ENCODE measurements at regions of chr11 and their contacts with region 1.

Region 1: DNA sequence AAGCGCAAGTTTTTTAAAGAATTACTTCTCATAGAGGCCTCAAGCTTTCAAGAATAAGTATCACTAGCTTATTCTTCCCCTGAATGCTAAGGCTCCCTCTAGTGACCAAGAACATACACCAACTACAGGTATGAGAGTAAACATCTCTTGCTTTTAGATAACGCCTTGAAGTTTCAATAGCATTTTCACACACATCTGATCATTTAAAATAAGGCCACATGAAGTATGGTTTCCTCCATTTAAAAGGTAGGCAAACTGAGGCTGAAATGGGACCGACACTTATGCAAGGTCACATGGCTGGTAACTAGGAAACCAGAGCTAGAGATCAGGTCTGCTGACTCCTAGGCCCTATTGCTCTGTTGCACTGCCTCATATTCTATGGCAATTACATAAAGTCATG is 66.5 kb downstream of the CCDC34 start:
- DNase-seq: no peak
- ATAC-seq: peak; percentile 94
- H3K4me3 Mint-ChIP-seq: no peak overlapping the region
- H3K27ac Mint-ChIP-seq: no peak overlapping the region
- H3K4me1 Mint-ChIP-seq: peaks cover 10% of the 10 kb centered on the region
- H3K27me3 Mint-ChIP-seq: peaks cover 4% of the 10 kb centered on the region; the same call in 1 of the 2 replicates
- CTCF ChIP-seq: peak; percentile 39; the same call in 1 of the 2 replicates

Region 2: GRCh38 chr11:26867286-26867685 is 429.2 kb before region 1 on chr11:
- CTCF ChIA-PET with region 1: no interaction called
- POLR2A ChIA-PET with region 1: no interaction called
- DNase-seq: no peak
- ATAC-seq: no peak
- H3K4me3 Mint-ChIP-seq: no peak overlapping the region
- H3K27ac Mint-ChIP-seq: no peak overlapping the region
- H3K4me1 Mint-ChIP-seq: no peaks in the 10 kb centered on the region
- H3K27me3 Mint-ChIP-seq: no peaks in the 10 kb centered on the region
- CTCF ChIP-seq: no peak

Region 3: DNA sequence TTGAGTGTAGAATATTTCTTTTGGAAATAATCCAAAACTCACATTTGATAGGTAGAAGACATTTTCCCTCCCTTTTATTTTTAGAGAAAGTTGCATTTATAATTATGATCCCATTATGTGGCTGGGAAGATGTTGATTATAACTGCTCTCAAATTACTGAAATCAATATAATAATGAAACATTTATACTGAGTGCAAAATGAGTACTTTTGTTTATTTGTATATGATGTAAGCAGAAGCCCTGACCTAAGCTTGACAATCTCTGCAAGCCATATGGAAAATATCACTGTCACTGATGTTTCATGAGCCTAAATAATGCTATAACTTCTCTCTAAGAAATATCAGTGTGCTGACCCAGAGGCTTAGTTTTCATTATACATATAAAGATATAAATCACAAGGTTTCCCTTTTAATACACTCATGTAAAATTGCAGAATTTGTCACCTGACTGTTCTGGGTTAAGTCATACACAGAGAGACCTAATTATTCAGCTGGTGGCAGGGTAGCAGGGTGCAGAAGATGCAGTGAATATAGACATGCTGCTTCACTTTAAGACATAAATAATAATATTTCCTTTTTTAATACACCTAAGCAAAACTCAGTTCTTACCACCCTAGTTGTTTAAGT is 156.6 kb before region 1 on chr11:
- CTCF ChIA-PET with region 1: no interaction called
- POLR2A ChIA-PET with region 1: no interaction called
- DNase-seq: no peak
- ATAC-seq: no peak
- H3K4me3 Mint-ChIP-seq: no peak overlapping the region
- H3K27ac Mint-ChIP-seq: no peak overlapping the region
- H3K4me1 Mint-ChIP-seq: no peaks in the 10 kb centered on the region
- H3K27me3 Mint-ChIP-seq: no peaks in the 10 kb centered on the region; the same call in 1 of the 2 replicates
- CTCF ChIP-seq: no peak

Region 4: GRCh38 chr11:27209562-27210005 is 86.9 kb before region 1 on chr11:
- CTCF ChIA-PET with region 1: interaction called, 15 read pairs
- POLR2A ChIA-PET with region 1: interaction called, 8 read pairs
- DNase-seq: no peak
- ATAC-seq: no peak
- H3K4me3 Mint-ChIP-seq: no peak overlapping the region
- H3K27ac Mint-ChIP-seq: no peak overlapping the region
- H3K4me1 Mint-ChIP-seq: peaks cover 16% of the 10 kb centered on the region
- H3K27me3 Mint-ChIP-seq: no peaks in the 10 kb centered on the region
- CTCF ChIP-seq: no peak

Region 5: DNA sequence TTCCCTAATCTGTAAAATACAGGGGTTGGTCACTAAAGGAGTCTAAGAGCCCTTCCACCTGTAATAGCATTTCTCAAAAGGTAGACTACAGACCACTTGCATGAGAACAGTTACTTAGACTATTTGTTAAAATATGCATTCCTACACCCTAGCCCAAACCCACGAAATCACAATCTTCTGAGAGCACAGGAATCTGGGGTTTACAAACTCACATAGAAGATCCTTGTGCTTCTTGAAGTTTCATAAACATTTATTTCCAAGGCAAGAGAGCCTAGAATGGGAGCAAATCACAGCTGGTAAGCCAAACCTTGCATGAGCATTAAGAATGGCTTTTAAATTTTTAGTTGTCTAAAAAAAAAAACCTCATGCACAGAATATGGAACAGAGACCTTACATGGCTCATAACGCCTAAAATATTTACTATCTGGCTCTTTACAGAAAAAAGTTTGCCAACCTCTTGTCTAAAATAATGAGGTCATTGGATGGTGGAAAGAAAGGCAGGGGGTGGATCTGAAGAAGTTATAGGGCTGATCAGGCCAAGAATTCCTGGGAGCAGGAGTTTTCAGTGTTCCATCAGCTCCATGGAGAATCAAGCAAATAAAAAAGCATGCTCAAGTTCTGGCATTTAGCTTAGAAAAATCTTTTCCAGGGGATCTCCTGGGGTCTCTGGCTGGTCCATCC is 66.8 kb before region 1 on chr11:
- CTCF ChIA-PET with region 1: interaction called, 19 read pairs
- POLR2A ChIA-PET with region 1: no interaction called
- DNase-seq: no peak
- ATAC-seq: no peak
- H3K4me3 Mint-ChIP-seq: no peak overlapping the region
- H3K27ac Mint-ChIP-seq: no peak overlapping the region
- H3K4me1 Mint-ChIP-seq: peaks cover 35% of the 10 kb centered on the region
- H3K27me3 Mint-ChIP-seq: peaks cover 4% of the 10 kb centered on the region; the same call in 1 of the 2 replicates
- CTCF ChIP-seq: no peak

Region 6: GRCh38 chr11:27309046-27309445 is 12.5 kb after region 1 on chr11:
- CTCF ChIA-PET with region 1: interaction called, 13 read pairs
- POLR2A ChIA-PET with region 1: no interaction called
- DNase-seq: no peak
- ATAC-seq: no peak
- H3K4me3 Mint-ChIP-seq: no peak overlapping the region
- H3K27ac Mint-ChIP-seq: no peak overlapping the region
- H3K4me1 Mint-ChIP-seq: peaks cover 14% of the 10 kb centered on the region
- H3K27me3 Mint-ChIP-seq: no peaks in the 10 kb centered on the region; the same call in 1 of the 2 replicates
- CTCF ChIP-seq: no peak

Region 7: DNA sequence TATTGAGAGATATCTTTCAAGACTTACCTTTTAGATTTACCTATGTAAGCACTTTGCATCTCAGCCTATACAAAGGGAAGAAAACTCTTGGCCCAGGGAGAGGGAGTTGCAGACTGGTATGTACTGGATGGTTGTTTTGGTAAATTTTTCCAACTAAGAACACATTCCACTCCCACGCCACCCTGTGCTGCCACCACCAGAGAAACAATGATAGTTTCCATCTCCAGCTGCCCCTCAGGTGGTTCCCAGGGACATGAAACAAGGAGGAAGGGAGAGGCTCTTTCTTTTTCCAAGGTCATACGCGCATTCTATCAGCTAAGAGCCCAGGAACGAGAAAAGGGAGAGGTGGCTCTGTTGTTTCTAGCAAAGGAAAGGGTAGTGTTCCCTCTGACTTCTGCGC is 32.1 kb after region 1 on chr11:
- CTCF ChIA-PET with region 1: interaction called, 21 read pairs
- POLR2A ChIA-PET with region 1: no interaction called
- DNase-seq: peak; percentile 56
- ATAC-seq: peak; percentile 90
- H3K4me3 Mint-ChIP-seq: no peak overlapping the region
- H3K27ac Mint-ChIP-seq: peak overlapping the region; percentile 94
- H3K4me1 Mint-ChIP-seq: peaks cover 40% of the 10 kb centered on the region
- H3K27me3 Mint-ChIP-seq: no peaks in the 10 kb centered on the region
- CTCF ChIP-seq: no peak

Region 8: DNA sequence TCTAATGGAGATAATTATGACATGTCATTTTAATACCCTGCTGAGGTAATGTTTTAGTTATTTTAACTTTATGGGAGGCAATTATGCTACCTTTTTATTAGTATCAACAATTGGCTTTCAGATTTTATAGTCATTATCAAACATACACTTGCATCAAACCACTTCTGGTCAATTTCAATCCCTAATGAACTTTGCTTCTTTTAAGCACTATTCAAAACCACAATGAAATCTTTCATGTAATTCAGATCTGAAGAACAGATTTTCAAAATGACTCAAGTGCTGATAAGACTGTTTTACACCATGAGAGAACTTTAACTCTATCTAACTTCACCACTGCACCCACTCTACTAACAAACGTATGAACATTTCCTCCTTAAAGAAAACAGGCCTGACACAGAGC is 92.4 kb after region 1 on chr11:
- CTCF ChIA-PET with region 1: no interaction called
- POLR2A ChIA-PET with region 1: no interaction called
- DNase-seq: no peak
- ATAC-seq: no peak
- H3K4me3 Mint-ChIP-seq: no peak overlapping the region
- H3K27ac Mint-ChIP-seq: peak overlapping the region; percentile 47
- H3K4me1 Mint-ChIP-seq: peaks cover 69% of the 10 kb centered on the region
- H3K27me3 Mint-ChIP-seq: no peaks in the 10 kb centered on the region
- CTCF ChIP-seq: no peak

Region 9: DNA sequence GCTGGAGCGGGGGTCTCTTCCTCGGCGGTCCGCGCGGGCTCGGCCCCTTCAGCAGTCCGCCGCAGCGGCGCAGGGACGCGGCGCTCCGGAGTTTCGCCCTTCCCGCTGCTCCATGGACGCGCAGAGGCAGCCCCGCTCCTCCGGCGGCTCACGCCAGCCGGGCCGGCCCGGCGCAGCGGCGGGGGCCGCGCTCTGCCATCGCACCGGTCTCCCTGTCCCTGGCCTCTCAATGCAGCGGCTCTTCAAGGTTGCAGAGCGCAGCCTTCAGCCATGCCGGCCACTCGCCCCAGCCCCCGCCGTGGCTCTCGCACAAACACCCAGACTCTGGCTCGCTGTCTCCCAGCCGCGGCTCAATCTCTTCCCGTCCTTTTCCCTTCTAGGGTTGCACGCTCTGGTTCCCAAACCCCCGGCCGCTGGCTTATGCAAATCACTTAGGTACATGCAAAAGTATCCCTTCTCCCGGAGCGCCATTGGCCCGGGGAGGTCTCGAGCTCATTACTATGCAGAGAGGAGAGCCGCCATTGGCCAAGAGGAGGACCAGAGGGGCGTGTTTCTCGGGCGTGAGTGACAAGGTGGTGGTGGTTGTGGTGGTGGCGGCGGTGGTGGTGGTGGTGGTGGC is 176.0 kb after region 1 on chr11 and contains the start of gene LGR4:
- CTCF ChIA-PET with region 1: interaction called, 12 read pairs
- POLR2A ChIA-PET with region 1: no interaction called
- DNase-seq: peak; percentile 98
- ATAC-seq: peak; percentile 97
- H3K4me3 Mint-ChIP-seq: peak within 1 kb of the TSS; percentile 98
- H3K27ac Mint-ChIP-seq: peak within 1 kb of the TSS; percentile 99
- H3K4me1 Mint-ChIP-seq: peaks cover 42% of the 10 kb centered on the region
- H3K27me3 Mint-ChIP-seq: no peaks in the 10 kb centered on the region
- CTCF ChIP-seq: no peak
- total RNA-seq, gene LGR4: 47.8 to 53.8 TPM (median 51.1 TPM) in 3 replicates